CD8-positive, alpha-beta memory T cell (primary cell): ENCODE measurements at regions of chr12 and their contacts with region 1.

Region 1: GRCh38 chr12:117119592-117120198 is 20.5 kb upstream of the TESC start:
- DNase-seq: peak in 3 of 5 donors; percentile 7 to 37 (median 25)
- H3K4me3 ChIP-seq: no peak overlapping the region
- H3K4me3 Mint-ChIP-seq: no peak overlapping the region
- H3K27ac ChIP-seq: no peak overlapping the region
- H3K27ac Mint-ChIP-seq: no peak overlapping the region
- H3K4me1 ChIP-seq: no peaks in the 10 kb centered on the region
- H3K4me1 Mint-ChIP-seq: no peaks in the 10 kb centered on the region
- H3K27me3 ChIP-seq: no peaks in the 10 kb centered on the region
- H3K27me3 Mint-ChIP-seq: peaks cover 0 to 2% of the 10 kb centered on the region in 2 donors

Region 2: DNA sequence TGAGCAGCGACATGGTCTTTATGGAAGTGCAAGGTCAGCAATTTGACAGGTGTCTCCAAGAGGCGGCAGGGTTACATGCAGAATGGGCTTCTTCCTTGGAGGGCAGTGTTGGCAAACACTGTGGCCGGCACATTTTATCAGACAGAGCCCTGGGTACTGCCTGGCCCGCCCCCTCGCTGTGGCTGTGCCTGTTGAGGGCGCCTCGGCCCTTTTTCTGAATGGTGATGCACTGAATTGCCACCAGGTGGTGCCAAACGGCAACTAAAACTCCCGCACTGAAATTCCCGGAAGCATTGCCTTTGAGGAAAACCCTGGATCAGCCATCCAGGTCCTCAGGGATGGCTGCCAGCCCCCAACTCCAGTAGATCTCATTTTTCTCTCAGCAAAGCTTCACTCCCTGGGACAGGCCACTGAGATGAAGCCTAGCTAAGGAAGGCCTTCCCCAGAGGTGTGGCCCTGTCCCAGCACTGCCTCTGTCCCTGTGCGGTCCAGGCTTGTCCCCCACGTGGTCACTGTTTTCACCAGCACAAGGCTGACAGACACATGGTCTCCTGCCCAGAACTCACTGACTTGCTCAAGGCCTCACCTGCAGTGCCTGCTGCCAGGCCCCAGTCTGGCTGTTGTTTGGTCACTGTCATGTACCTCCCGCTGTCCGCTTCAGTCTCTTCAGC is 94.1 kb before region 1 on chr12:
- CTCF ChIA-PET with region 1: interaction called, 102 read pairs
- POLR2A ChIA-PET with region 1: no interaction called
- DNase-seq: peak; percentile 28 to 63 (median 37)
- H3K4me3 ChIP-seq: no peak overlapping the region
- H3K4me3 Mint-ChIP-seq: no peak overlapping the region
- H3K27ac ChIP-seq: no peak overlapping the region
- H3K27ac Mint-ChIP-seq: peak overlapping the region in 6 of 8 donors; percentile 32 to 88 (median 66)
- H3K4me1 ChIP-seq: no peaks in the 10 kb centered on the region
- H3K4me1 Mint-ChIP-seq: peaks cover 3 to 6% (median 6%) of the 10 kb centered on the region in 3 donors
- H3K27me3 ChIP-seq: no peaks in the 10 kb centered on the region
- H3K27me3 Mint-ChIP-seq: no peaks in the 10 kb centered on the region

Region 3: DNA sequence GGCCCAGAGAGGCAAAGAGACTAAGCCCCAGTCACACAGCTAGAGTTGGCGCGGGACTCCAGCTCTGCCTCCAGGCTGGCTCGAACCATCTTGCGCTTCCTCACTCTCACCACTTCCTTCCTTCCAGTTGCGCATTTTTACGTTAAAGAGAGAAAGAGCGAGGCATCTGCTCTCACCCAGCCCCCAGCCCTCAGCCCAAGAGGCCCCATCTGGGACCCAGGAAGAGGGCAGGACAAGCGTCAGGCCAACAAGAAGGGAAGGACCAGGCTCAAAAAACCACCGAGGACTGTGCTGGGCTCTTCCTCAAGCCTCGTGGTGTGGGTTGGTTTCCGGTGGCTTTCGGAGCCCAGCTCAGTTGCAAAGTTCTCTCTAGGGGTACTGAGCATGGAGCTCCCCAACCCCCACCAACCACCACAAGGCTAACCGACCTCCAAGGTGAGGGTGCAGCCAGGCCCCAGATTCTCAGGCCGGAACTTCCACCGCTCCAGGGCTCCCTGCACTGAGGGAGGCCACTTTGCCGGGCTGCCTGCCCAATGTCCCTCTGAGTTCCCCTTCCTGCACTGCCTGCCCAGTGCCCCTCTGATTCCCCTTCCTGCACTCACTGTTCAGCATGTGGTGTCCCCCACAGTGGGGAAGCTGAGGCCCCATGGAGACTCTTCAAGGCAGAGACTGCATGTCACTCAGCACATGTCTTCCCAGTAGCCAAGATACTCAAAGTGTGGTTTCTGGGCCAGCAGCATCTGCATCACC is 56.4 kb before region 1 on chr12:
- CTCF ChIA-PET with region 1: interaction called, 10 read pairs
- POLR2A ChIA-PET with region 1: no interaction called
- DNase-seq: peak; percentile 12 to 56 (median 38)
- H3K4me3 ChIP-seq: peak overlapping the region; percentile 43
- H3K4me3 Mint-ChIP-seq: peak overlapping the region; percentile 71 to 84 (median 80)
- H3K27ac ChIP-seq: no peak overlapping the region
- H3K27ac Mint-ChIP-seq: peak overlapping the region; percentile 78 to 96 (median 90)
- H3K4me1 ChIP-seq: peaks cover 25% of the 10 kb centered on the region
- H3K4me1 Mint-ChIP-seq: peaks cover 39 to 52% (median 41%) of the 10 kb centered on the region in 3 donors
- H3K27me3 ChIP-seq: no peaks in the 10 kb centered on the region
- H3K27me3 Mint-ChIP-seq: peaks cover 0 to 1% of the 10 kb centered on the region in 2 donors

Region 4: GRCh38 chr12:117130801-117131200 is 11.1 kb after region 1 on chr12:
- CTCF ChIA-PET with region 1: interaction called, 14 read pairs
- POLR2A ChIA-PET with region 1: no interaction called
- DNase-seq: no peak
- H3K4me3 ChIP-seq: no peak overlapping the region
- H3K4me3 Mint-ChIP-seq: no peak overlapping the region
- H3K27ac ChIP-seq: no peak overlapping the region
- H3K27ac Mint-ChIP-seq: no peak overlapping the region
- H3K4me1 ChIP-seq: peaks cover 18% of the 10 kb centered on the region
- H3K4me1 Mint-ChIP-seq: peaks cover 11 to 17% (median 11%) of the 10 kb centered on the region in 3 donors
- H3K27me3 ChIP-seq: no peaks in the 10 kb centered on the region
- H3K27me3 Mint-ChIP-seq: no peaks in the 10 kb centered on the region